ENCODE measurements at regions of chr1 and their contacts with region 1.

Region 1: DNA sequence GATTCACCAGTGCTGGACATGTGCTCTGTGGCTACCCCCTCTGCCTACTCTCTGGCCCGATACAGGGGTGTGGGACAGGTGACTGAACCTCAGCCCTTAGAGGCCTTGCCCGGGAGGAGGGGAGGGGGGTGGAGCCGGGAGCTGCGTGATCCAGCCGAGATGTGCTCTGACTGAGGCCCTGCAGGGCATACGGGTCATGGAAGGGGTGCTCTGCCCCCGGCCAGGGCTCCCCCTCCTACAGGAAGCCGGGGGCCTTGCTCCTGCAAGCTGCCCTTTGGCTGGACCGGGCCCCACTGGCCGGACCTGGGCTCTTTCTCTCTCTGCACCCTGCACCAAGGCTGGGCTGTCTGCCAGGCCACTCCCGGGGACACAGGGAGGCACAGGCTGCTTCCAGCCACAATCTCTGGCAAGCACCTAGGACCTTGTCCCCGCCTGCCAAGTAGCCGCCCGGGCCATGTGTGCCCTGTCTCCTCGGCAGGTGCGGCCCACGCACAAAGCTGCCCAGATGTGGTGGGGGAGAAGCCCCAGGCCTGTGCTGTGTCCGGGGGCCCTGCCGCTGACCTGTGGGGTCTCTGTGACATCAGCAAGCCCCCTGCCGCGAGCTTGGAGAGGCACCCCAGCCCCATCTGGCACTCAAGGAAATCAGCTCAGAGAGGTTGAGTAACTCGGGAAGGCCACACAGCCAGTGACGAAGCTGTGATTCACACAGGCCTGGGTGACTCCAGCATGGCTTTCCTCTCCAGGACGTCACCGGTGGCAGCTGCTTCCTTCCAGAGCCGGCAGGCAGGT is 1.5 kb downstream of the SCNN1D start:
- DNase-seq: no peak
- ATAC-seq: no peak
- H3K4me3 ChIP-seq: no peak overlapping the region
- H3K27ac ChIP-seq: no peak overlapping the region
- H3K4me1 ChIP-seq: no peaks in the 10 kb centered on the region
- H3K27me3 ChIP-seq: no peaks in the 10 kb centered on the region

Region 2: DNA sequence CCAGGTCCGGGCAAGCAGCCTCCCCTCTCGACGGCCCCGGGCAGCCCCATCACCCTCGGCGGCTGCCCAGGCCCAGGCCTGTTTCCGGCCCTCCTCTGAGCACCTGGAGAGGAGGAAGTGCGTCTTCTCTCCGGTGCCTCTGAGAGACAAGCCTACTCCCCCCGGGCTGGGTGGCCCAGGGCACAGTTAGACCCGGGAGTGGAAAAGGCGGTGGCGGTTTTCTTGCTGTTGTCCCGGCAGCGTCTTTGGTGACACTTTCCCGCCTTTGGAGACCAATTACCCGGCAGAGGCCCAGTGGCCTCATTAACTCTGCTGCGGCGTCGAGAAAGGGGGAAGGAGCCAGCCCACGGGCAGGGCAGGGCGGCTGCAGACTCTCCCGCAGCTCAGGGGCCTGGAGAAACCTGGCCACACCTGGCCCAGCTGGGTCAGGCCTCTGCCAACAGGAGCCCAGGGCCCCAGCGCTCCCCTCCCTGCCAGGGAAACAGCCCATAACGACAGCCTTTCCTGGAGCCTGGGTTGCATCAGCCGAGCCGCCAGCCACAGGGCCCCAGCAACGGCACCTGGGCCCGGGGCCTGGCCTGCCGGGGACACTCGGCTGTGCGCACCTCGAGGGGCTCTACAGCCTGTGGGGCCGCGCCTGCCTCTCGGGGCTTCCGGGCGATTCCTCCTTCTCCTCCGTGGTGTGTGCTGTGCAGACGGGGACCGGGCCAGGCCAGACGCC is 137.4 kb before region 1 on chr1:
- intact Hi-C with region 1: loop called in 1 of 2 experiments (anchors 10 kb)
- DNase-seq: no peak
- ATAC-seq: no peak
- H3K4me3 ChIP-seq: no peak overlapping the region
- H3K27ac ChIP-seq: no peak overlapping the region
- H3K4me1 ChIP-seq: no peaks in the 10 kb centered on the region
- H3K27me3 ChIP-seq: no peaks in the 10 kb centered on the region

Region 3: GRCh38 chr1:1231400-1232223 is 50.1 kb before region 1 on chr1 and contains the start of gene SDF4:
- intact Hi-C with region 1: no loop called
- DNase-seq: peak; percentile 98 to 99
- ATAC-seq: peak; percentile 96
- H3K4me3 ChIP-seq: peak within 1 kb of the TSS; percentile 83 to 85
- H3K27ac ChIP-seq: peak within 1 kb of the TSS in 1 of 2 donors; percentile 73
- H3K4me1 ChIP-seq: no peaks in the 10 kb centered on the region
- H3K27me3 ChIP-seq: no peaks in the 10 kb centered on the region
- total RNA-seq, gene SDF4: 138 to 140 TPM

Region 4: GRCh38 chr1:1374929-1375662 is 93.4 kb after region 1 on chr1 and contains the start of gene AURKAIP1:
- intact Hi-C with region 1: no loop called
- DNase-seq: peak; percentile 99
- ATAC-seq: peak; percentile 97
- H3K4me3 ChIP-seq: peak within 1 kb of the TSS; percentile 61 to 69
- H3K27ac ChIP-seq: peak within 1 kb of the TSS in 1 of 2 donors; percentile 73
- H3K4me1 ChIP-seq: no peaks in the 10 kb centered on the region
- H3K27me3 ChIP-seq: no peaks in the 10 kb centered on the region
- total RNA-seq, gene AURKAIP1: 59.6 to 65.6 TPM